Right ventricle myocardium inferior (tissue), 1 donor: ENCODE measurements at regions of chr6 and their contacts with region 1.

Region 1: DNA sequence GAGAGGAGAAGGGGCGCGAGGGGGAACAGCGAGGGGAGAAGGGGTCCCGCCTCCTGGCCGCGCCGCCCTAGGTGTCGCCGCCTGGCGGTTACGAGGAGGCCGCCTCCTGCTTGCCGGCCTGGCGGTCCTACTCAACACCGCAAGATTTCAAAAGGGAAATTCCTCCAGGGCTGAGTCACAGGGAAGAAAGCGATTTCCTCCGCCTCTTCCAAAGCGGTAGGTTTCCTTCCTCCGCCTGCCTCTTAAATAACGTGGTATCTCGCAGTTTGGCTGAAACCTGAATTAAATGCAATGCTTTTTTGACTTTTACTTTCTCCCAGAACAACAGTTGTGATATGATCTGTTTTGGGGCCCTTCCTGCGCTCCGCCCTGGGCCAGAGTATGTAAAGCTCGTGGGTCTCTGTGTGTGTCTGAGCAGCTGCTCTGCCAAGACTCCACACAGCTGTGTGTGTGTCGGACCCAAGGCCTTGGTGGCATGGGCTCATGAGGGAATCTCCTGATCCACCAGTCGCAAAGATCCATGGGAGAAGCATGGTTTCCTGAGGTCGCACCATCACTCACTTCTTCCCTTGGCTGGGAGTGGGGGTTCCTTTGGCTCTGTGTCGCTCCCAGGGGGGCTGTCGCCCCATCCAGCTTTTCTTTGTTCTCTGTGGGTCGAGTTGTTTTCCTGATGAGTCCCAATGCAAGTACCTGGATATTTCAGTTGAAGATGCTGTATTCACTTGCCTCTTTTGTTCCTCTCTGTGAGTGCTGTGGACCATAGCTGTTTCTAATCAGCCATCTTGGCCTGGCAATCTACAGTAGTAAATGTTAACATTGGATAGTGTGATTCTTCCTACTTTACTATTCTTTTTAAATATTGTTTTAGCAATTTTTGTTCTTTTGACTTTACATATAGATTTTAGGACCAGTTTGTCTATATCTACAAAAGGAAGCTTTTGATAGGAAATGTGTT is 31.6 kb upstream of the NOTCH4 start:
- DNase-seq: peak; percentile 74
- ATAC-seq: peak; percentile 92

Region 2: GRCh38 chr6:32177788-32178546 is 77.5 kb before region 1 on chr6 and contains the start of gene RNF5:
- intact Hi-C with region 1: no loop called
- DNase-seq: peak; percentile 96
- ATAC-seq: peak; percentile 88
- total RNA-seq, gene RNF5: 97.5 TPM

Region 3: GRCh38 chr6:32393665-32394420 is 138.4 kb after region 1 on chr6:
- intact Hi-C with region 1: loop called (anchors 2 kb)
- DNase-seq: no peak
- ATAC-seq: peak; percentile 37

Region 4: GRCh38 chr6:32718879-32719278 is 463.4 kb after region 1 on chr6:
- intact Hi-C with region 1: no loop called
- DNase-seq: no peak
- ATAC-seq: no peak